Calu3 (cell line): ENCODE measurements at regions of chr7 and their contacts with region 1.

Region 1: DNA sequence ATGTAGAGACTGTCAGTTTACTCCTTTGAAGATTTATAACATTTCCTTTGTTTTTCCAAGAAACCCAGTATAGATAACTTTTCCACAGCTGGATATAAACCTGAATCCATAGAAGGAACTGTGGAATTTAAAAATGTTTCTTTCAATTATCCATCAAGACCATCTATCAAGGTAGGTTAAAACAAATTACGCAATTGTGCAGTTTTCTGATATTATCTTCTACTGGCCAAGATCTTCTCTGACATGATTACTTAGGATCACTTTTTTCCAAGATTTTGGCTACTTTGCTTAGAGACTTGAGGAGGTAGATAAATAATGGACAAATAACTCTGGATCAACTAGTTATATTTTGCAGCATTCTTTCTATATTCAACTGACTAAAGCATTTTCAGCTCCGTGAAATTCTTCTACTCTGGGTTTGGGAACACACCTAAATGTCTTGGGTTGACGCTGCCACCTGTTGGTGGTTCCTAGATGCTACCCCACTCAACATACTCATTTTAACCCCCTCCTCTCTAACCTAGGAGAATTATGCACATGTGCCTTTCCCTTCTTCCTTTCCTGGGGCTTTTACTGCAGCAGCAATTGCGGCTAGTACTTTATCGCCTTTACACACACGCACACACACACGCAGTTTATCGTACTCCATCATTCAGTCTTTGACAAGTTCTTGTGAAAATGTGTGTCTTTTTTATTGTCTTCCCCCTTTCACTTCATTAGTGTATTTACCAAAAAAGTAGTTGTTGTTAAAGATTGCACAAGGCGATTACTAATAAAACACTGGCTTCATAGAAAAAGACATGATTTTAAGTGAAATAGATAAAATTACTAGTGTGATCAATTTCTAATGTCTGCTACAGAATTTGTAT is 32.7 kb downstream of the ABCB5 start:
- DNase-seq: peak; percentile 77
- H3K4me3 Mint-ChIP-seq: no peak overlapping the region
- H3K27ac Mint-ChIP-seq: no peak overlapping the region
- H3K4me1 Mint-ChIP-seq: peaks cover 9% of the 10 kb centered on the region
- H3K27me3 Mint-ChIP-seq: no peaks in the 10 kb centered on the region
- CTCF ChIP-seq: peak; percentile 92

Region 2: GRCh38 chr7:19708397-19709248 is 939.5 kb before region 1 on chr7 and contains the start of gene POLR1F:
- CTCF ChIA-PET with region 1: interaction called, 29 read pairs
- intact Hi-C with region 1: no loop called
- DNase-seq: peak; percentile 99
- H3K4me3 Mint-ChIP-seq: peak within 1 kb of the TSS; percentile 99
- H3K27ac Mint-ChIP-seq: peak within 1 kb of the TSS; percentile 92
- H3K4me1 Mint-ChIP-seq: peaks cover 52% of the 10 kb centered on the region
- H3K27me3 Mint-ChIP-seq: no peaks in the 10 kb centered on the region
- CTCF ChIP-seq: peak; percentile 96
- total RNA-seq, gene POLR1F: 37.7 and 43.1 TPM in 2 replicates

Region 3: GRCh38 chr7:19713676-19714075 is 934.5 kb before region 1 on chr7:
- CTCF ChIA-PET with region 1: interaction called, 29 read pairs
- intact Hi-C with region 1: loop called (anchors 1 kb)
- DNase-seq: peak; percentile 66
- H3K4me3 Mint-ChIP-seq: no peak overlapping the region
- H3K27ac Mint-ChIP-seq: no peak overlapping the region
- H3K4me1 Mint-ChIP-seq: peaks cover 31% of the 10 kb centered on the region
- H3K27me3 Mint-ChIP-seq: no peaks in the 10 kb centered on the region
- CTCF ChIP-seq: peak; percentile 53

Region 4: GRCh38 chr7:19754521-19755116 is 893.5 kb before region 1 on chr7:
- CTCF ChIA-PET with region 1: no interaction called
- intact Hi-C with region 1: loop called (anchors 2 kb)
- DNase-seq: peak; percentile 46
- H3K4me3 Mint-ChIP-seq: no peak overlapping the region
- H3K27ac Mint-ChIP-seq: no peak overlapping the region
- H3K4me1 Mint-ChIP-seq: peaks cover 8% of the 10 kb centered on the region
- H3K27me3 Mint-ChIP-seq: no peaks in the 10 kb centered on the region
- CTCF ChIP-seq: peak; percentile 80

Region 5: GRCh38 chr7:20146451-20146850 is 501.7 kb before region 1 on chr7:
- CTCF ChIA-PET with region 1: no interaction called
- intact Hi-C with region 1: no loop called
- DNase-seq: no peak
- H3K4me3 Mint-ChIP-seq: no peak overlapping the region
- H3K27ac Mint-ChIP-seq: no peak overlapping the region
- H3K4me1 Mint-ChIP-seq: peaks cover 6% of the 10 kb centered on the region
- H3K27me3 Mint-ChIP-seq: no peaks in the 10 kb centered on the region
- CTCF ChIP-seq: no peak

Region 6: DNA sequence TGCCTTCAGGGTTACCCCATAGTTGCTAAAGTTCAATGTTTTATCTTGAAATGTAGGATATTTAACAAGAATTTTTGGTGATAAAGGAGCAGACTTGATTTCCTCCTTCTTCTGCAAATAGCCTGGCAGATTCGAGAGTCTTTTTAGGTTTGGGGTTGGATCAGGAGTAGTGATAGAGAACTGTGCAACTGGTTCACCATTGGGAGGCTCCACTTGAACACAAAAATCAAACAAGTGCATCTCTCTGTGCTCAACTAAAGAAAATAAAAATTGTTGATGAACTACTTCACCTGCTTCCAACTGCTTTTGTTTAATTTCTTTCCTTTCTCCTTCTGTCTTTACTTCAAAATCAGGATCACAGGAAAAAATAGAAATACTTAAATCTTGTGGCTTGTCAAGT is 489.5 kb before region 1 on chr7:
- CTCF ChIA-PET with region 1: no interaction called
- intact Hi-C with region 1: loop called (anchors 5 kb)
- DNase-seq: peak; percentile 20
- H3K4me3 Mint-ChIP-seq: no peak overlapping the region
- H3K27ac Mint-ChIP-seq: peak overlapping the region; percentile 48
- H3K4me1 Mint-ChIP-seq: peaks cover 24% of the 10 kb centered on the region
- H3K27me3 Mint-ChIP-seq: no peaks in the 10 kb centered on the region
- CTCF ChIP-seq: no peak

Region 7: DNA sequence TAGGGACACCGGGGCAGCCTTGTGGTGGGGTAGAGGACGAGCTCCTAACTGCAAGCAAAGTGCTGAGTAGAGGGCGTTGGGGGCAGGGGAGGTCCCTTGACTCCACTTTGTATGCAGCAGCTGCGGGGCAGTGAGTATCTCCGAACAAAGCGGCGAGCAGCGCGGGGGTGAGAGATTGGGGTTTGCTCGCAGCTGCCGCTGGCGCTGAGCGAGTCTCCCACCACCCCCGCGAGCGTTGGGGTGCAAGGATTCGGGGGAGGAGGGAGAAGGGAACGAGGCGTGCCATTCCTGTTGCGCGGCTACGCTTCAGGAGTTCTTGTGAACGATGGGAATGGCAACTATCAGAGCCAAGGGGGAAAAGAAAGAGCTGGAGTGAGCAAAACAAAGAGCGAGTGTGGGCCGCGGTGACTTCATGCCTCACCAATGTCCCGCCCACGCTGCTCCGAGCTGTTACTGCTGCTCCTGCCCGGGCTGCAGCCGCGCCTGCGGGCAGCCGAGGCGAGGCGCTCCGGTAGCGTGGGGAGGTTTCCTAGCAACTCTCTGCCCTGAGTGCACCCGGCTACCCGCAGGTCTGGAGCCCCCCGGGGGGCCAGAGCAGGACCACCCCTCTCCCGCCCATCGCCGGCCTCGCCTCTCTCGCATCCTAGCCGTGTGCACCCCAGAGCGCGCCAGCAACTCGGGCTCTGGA is 317.8 kb before region 1 on chr7 and contains the start of gene ITGB8:
- CTCF ChIA-PET with region 1: interaction called, 3 read pairs
- intact Hi-C with region 1: loop called (anchors 5 kb)
- DNase-seq: peak; percentile 93
- H3K4me3 Mint-ChIP-seq: peak within 1 kb of the TSS; percentile 93
- H3K27ac Mint-ChIP-seq: peak within 1 kb of the TSS; percentile 98
- H3K4me1 Mint-ChIP-seq: peaks cover 21% of the 10 kb centered on the region
- H3K27me3 Mint-ChIP-seq: no peaks in the 10 kb centered on the region
- CTCF ChIP-seq: no peak
- total RNA-seq, gene ITGB8: 157 and 183 TPM in 2 replicates

Region 8: DNA sequence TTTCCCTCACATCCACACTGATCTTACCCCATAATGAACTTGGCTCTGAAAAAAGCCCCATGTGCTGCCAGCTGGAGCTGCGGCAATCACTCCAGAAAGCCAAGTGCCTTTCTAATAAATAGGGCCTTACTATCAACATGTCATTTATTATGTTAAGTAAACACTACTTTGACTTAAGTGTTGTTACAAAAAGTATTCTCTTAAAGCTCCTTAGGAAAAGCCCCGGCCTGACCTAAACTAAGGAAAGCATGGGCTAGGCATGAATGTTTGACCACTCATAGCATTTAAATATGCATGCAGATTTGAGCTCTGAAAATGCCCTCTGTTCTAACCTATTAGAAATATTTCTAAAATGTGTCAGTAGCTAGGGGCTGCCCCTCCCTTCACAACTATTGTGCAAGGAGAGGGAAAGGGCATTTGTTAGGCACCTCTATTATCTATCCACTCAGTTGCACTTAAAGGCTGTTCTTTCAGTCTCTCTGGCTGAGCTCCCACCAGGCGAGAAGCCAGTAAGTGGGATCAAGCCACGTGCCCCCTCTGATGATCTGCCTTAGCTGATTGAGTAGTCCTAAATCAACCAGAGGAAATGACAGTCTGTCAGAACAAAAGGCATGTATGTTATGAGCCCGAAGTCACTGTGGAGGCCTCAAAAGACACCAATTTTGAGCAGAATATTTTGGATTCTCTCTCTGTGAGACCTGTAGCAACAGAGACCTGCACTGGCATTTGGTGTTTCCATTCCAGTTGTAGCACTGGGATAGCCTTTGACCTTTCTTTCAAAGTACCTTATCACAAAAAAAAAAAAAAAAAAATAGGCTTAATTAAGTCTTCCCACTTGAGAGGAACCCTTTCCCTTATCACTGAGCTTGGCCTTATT is 240.3 kb before region 1 on chr7:
- CTCF ChIA-PET with region 1: interaction called, 4 read pairs
- intact Hi-C with region 1: loop called (anchors 5 kb)
- DNase-seq: peak; percentile 77
- H3K4me3 Mint-ChIP-seq: peak overlapping the region; percentile 22
- H3K27ac Mint-ChIP-seq: peak overlapping the region; percentile 83
- H3K4me1 Mint-ChIP-seq: peaks cover 52% of the 10 kb centered on the region
- H3K27me3 Mint-ChIP-seq: no peaks in the 10 kb centered on the region
- CTCF ChIP-seq: no peak

Region 9: DNA sequence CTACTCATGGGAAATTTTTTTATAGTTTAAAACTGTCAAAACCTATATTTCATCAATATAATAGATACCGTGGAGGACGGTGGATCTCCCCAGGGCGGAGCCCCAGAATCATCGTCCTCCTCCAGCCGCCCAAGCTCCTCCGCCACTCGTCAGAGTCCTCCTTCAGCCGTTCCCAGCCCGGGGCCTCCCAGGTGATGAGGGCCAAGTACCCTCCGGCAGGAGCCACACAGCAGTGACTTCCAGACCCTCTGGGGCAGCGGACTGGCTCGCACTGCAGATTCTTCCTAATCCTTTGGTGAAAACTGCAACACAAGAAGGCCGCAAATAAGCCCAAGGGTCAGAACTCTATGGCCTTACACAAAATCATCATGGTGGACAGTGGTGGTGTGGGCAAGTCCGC is 59.5 kb before region 1 on chr7:
- CTCF ChIA-PET with region 1: no interaction called
- intact Hi-C with region 1: no loop called
- DNase-seq: no peak
- H3K4me3 Mint-ChIP-seq: no peak overlapping the region
- H3K27ac Mint-ChIP-seq: no peak overlapping the region
- H3K4me1 Mint-ChIP-seq: peaks cover 14% of the 10 kb centered on the region
- H3K27me3 Mint-ChIP-seq: no peaks in the 10 kb centered on the region
- CTCF ChIP-seq: no peak